ENCODE measurements at regions of chr17 and their contacts with region 1.

Region 1: GRCh38 chr17:80377798-80378197 is 37.2 kb upstream of the ENDOV start:
- H3K4me3 ChIP-seq: no peak overlapping the region
- H3K27ac ChIP-seq: no peak overlapping the region
- H3K4me1 ChIP-seq: no peaks in the 10 kb centered on the region
- CTCF ChIP-seq: no peak

Region 2: DNA sequence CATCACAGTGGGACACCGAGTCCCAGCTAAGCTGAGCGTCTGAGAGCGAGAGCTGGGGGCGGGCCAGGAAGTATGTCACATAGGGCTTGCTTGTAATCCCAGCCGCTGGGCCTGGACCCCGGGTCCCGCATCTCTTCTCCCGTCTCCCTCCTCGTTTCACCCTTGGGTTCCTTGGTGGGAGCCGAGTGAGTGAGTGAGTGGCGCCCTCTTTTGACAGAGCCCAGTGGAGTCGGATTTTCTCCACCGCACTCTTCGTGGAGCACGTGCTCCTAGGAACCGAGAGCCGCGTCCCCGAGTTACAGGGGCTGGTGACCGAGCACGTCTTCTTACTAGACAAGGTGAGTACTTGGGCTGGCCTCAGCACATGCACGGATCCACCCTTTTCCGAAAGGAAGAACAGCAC is 13.6 kb before region 1 on chr17:
- CTCF ChIA-PET with region 1: interaction called, 14 read pairs
- POLR2A ChIA-PET with region 1: interaction called, 3 read pairs
- H3K4me3 ChIP-seq: no peak overlapping the region
- H3K27ac ChIP-seq: no peak overlapping the region
- H3K4me1 ChIP-seq: no peaks in the 10 kb centered on the region
- CTCF ChIP-seq: no peak

Region 3: DNA sequence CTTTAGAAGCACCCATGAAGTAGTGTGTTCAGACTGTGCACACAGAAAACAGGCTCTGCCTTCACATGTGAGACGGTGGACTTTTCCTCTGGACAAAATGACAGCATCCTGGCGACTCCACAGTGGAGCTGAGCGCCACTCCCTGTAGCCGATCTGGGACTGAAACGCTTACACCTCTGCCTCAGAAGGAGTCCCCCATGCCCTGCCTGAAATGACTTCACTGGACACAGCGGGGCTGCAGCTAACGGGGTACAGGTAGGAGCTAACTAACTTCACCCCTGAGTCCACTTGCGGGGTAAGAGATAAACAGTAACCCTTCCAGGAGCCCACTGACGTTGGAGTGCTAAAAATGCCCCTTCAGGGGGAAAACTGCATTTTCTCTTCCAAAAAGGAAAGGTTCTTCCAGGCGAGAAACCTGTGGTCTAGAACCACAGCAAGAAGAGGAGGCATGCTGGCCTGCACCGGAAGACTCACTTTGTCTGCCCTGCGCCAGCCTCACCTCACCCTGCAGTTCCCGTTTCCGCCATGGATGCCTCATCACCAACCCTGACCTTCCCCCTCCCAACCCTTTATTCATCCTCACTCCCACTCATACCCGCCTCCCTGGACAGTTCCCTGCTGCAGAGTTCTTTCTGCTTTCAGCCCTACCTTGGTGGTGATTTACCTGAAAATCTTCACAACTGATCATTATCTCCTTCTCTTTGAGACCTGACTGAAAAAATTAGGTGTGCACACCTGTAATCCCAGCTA is 17.8 kb after region 1 on chr17:
- CTCF ChIA-PET with region 1: no interaction called
- POLR2A ChIA-PET with region 1: no interaction called
- H3K4me3 ChIP-seq: no peak overlapping the region
- H3K27ac ChIP-seq: no peak overlapping the region
- H3K4me1 ChIP-seq: no peaks in the 10 kb centered on the region
- CTCF ChIP-seq: no peak